ENCODE measurements at regions of chr1 and their contacts with region 1.

Region 1: GRCh38 chr1:151059078-151059907 is at the start of gene CDC42SE1:
- DNase-seq: peak; percentile 68 to 93 (median 81)
- ATAC-seq: peak; percentile 77 to 83 (median 80)
- H3K4me3 ChIP-seq: peak within 1 kb of the TSS; percentile 78 to 100
- H3K4me3 Mint-ChIP-seq: peak within 1 kb of the TSS; percentile 93 to 99 (median 95)
- H3K27ac ChIP-seq: peak within 1 kb of the TSS; percentile 92
- H3K27ac Mint-ChIP-seq: peak within 1 kb of the TSS; percentile 96 to 99
- H3K4me1 ChIP-seq: peaks cover 19 to 39% of the 10 kb centered on the region in 2 experiments
- H3K4me1 Mint-ChIP-seq: peaks cover 46 to 59% (median 47%) of the 10 kb centered on the region in 3 donors
- H3K27me3 ChIP-seq: no peaks in the 10 kb centered on the region
- H3K27me3 Mint-ChIP-seq: no peaks in the 10 kb centered on the region
- total RNA-seq, gene CDC42SE1: 419 to 475 (median 450) TPM

Region 2: GRCh38 chr1:150186789-150187559 is 872.3 kb before region 1 on chr1:
- CTCF ChIA-PET with region 1: interaction called in 1 of 2 experiments, 12 read pairs
- POLR2A ChIA-PET with region 1: no interaction called
- DNase-seq: peak in 17 of 35 experiments; percentile 1 to 72 (median 13)
- ATAC-seq: peak; percentile 75 to 88 (median 77)
- H3K4me3 ChIP-seq: no peak overlapping the region
- H3K4me3 Mint-ChIP-seq: peak overlapping the region in 1 of 3 donors; percentile 17
- H3K27ac ChIP-seq: no peak overlapping the region
- H3K27ac Mint-ChIP-seq: peak overlapping the region in 1 of 2 donors; percentile 23
- H3K4me1 ChIP-seq: peaks cover 2 to 13% of the 10 kb centered on the region in 2 experiments
- H3K4me1 Mint-ChIP-seq: peaks cover 0 to 11% (median 9%) of the 10 kb centered on the region in 3 donors
- H3K27me3 ChIP-seq: peaks cover 0 to 3% of the 10 kb centered on the region in 2 experiments
- H3K27me3 Mint-ChIP-seq: peaks cover 0 to 3% of the 10 kb centered on the region in 2 donors

Region 3: DNA sequence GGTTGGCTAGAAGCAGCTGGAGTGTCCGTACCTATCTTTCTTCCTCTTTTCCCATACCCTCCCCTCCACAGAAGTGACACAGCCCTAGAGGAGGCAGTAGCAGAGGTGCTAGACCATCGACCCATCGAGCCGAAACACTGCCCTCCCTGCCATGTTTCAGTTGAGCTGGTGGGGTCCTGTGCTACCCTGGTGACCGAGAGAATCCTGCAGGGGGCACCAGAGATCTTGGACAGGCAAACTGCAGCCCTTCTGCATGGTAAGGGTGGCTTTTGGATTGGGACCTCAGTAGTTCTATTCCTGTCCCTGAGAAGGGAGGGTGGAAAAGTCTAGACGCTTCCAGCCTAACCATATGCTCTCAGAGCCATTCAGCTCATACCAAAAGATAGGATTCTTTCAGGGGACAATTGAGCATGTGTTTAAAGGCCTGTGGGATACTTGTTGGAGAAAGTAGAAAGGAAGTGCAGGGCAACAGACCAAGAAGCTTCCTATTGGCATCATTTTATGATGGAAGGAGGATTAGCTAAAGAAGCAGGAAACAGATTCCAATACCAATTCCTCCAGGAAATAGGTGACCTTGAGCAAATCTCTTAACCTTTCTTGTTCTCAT is 34.6 kb before region 1 on chr1:
- CTCF ChIA-PET with region 1: interaction called, 3 to 22 read pairs
- POLR2A ChIA-PET with region 1: interaction called, 4 to 6 read pairs
- DNase-seq: peak; percentile 72 to 92 (median 85)
- ATAC-seq: peak; percentile 99 to 100 (median 100)
- H3K4me3 ChIP-seq: no peak overlapping the region
- H3K4me3 Mint-ChIP-seq: peak overlapping the region in 2 of 3 donors; percentile 23 to 43
- H3K27ac ChIP-seq: no peak overlapping the region
- H3K27ac Mint-ChIP-seq: peak overlapping the region; percentile 31 to 36
- H3K4me1 ChIP-seq: peaks cover 0 to 7% of the 10 kb centered on the region in 2 experiments
- H3K4me1 Mint-ChIP-seq: peaks cover 6 to 16% (median 8%) of the 10 kb centered on the region in 3 donors
- H3K27me3 ChIP-seq: no peaks in the 10 kb centered on the region
- H3K27me3 Mint-ChIP-seq: no peaks in the 10 kb centered on the region

Region 4: GRCh38 chr1:151047925-151048645 is 11.2 kb before region 1 on chr1:
- CTCF ChIA-PET with region 1: interaction called, 3 to 10 read pairs
- POLR2A ChIA-PET with region 1: interaction called, 4 to 16 read pairs
- DNase-seq: peak in 33 of 35 experiments; percentile 32 to 79 (median 50)
- ATAC-seq: peak; percentile 61 to 79 (median 64)
- H3K4me3 ChIP-seq: peak overlapping the region; percentile 75 to 95
- H3K4me3 Mint-ChIP-seq: peak overlapping the region; percentile 88 to 92 (median 89)
- H3K27ac ChIP-seq: peak overlapping the region; percentile 72
- H3K27ac Mint-ChIP-seq: peak overlapping the region; percentile 96
- H3K4me1 ChIP-seq: peaks cover 20 to 41% of the 10 kb centered on the region in 2 experiments
- H3K4me1 Mint-ChIP-seq: peaks cover 70 to 78% (median 73%) of the 10 kb centered on the region in 3 donors
- H3K27me3 ChIP-seq: no peaks in the 10 kb centered on the region
- H3K27me3 Mint-ChIP-seq: no peaks in the 10 kb centered on the region

Region 5: DNA sequence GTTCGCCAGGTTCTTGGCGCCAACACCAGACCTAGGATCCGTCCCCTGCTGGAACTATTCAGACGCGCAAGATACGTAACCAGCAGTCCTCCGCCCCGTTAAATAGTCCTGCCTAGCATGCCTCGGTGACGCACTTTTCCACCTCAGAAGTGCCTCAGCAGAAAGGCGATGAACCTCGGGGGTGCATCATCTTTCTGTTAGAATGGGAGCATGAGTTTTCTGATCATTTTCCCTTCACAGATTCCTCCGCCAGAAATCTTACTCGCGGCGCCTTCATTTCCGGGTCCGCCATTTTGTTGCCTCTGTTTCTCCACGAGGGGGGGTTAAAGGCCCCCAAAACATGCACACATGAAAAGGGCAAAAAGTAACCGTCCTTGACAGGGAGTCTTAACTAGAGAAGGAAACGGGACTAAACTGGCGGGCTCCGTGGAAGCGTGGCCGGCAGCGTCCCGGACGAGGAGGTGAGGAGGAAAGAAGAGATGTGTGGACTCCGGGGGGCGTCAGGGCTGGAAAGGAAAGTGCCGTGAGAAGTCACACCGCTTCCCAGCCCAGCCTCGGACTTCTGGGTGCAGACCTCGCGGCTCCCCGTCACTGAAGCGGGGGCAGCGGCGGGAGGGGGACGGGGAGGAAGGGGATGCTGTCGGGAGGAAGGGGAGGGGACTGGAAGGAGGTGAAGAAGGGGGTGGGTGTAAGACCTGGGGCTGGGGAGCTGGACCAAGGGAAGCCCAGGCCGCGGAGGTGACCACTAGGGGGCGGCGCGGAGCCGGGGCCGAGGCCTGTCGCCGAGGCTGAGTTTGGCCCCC is 11.4 kb after region 1 on chr1 and contains the start of gene GABPB2:
- CTCF ChIA-PET with region 1: interaction called, 5 to 10 read pairs
- POLR2A ChIA-PET with region 1: interaction called in 1 of 2 experiments, 14 read pairs
- DNase-seq: peak; percentile 68 to 93 (median 79)
- ATAC-seq: peak; percentile 81 to 85 (median 82)
- H3K4me3 ChIP-seq: peak within 1 kb of the TSS; percentile 87 to 98
- H3K4me3 Mint-ChIP-seq: peak within 1 kb of the TSS; percentile 94 to 97 (median 96)
- H3K27ac ChIP-seq: peak within 1 kb of the TSS; percentile 94
- H3K27ac Mint-ChIP-seq: peak within 1 kb of the TSS; percentile 100
- H3K4me1 ChIP-seq: peaks cover 3 to 24% of the 10 kb centered on the region in 2 experiments
- H3K4me1 Mint-ChIP-seq: peaks cover 24 to 30% (median 28%) of the 10 kb centered on the region in 3 donors
- H3K27me3 ChIP-seq: no peaks in the 10 kb centered on the region
- H3K27me3 Mint-ChIP-seq: no peaks in the 10 kb centered on the region
- total RNA-seq, gene GABPB2: 29.6 to 41.3 (median 32.5) TPM

Region 6: GRCh38 chr1:151175910-151176309 is 116.6 kb after region 1 on chr1 and contains the start of gene TMOD4:
- CTCF ChIA-PET with region 1: no interaction called
- POLR2A ChIA-PET with region 1: no interaction called
- DNase-seq: no peak
- ATAC-seq: peak in 3 of 4 experiments; percentile 47 to 70 (median 61)
- H3K4me3 ChIP-seq: no peak within 1 kb of the TSS
- H3K4me3 Mint-ChIP-seq: no peak within 1 kb of the TSS
- H3K27ac ChIP-seq: no peak within 1 kb of the TSS
- H3K27ac Mint-ChIP-seq: peak within 1 kb of the TSS; percentile 34 to 48
- H3K4me1 ChIP-seq: no peaks in the 10 kb centered on the region
- H3K4me1 Mint-ChIP-seq: peaks cover 0 to 10% (median 2%) of the 10 kb centered on the region in 3 donors
- H3K27me3 ChIP-seq: no peaks in the 10 kb centered on the region
- H3K27me3 Mint-ChIP-seq: no peaks in the 10 kb centered on the region
- total RNA-seq, gene TMOD4: 1.9 to 6.2 (median 5.3) TPM

Region 7: GRCh38 chr1:151189638-151190445 is 130.5 kb after region 1 on chr1 and contains the start of gene VPS72:
- CTCF ChIA-PET with region 1: no interaction called
- POLR2A ChIA-PET with region 1: no interaction called
- DNase-seq: peak; percentile 67 to 91 (median 82)
- ATAC-seq: peak; percentile 92 to 95 (median 94)
- H3K4me3 ChIP-seq: peak within 1 kb of the TSS; percentile 78 to 85
- H3K4me3 Mint-ChIP-seq: peak within 1 kb of the TSS; percentile 98 to 100 (median 99)
- H3K27ac ChIP-seq: peak within 1 kb of the TSS; percentile 70
- H3K27ac Mint-ChIP-seq: peak within 1 kb of the TSS; percentile 97 to 98
- H3K4me1 ChIP-seq: peaks cover 12 to 15% of the 10 kb centered on the region in 2 experiments
- H3K4me1 Mint-ChIP-seq: peaks cover 34 to 40% (median 37%) of the 10 kb centered on the region in 3 donors
- H3K27me3 ChIP-seq: no peaks in the 10 kb centered on the region
- H3K27me3 Mint-ChIP-seq: no peaks in the 10 kb centered on the region
- total RNA-seq, gene VPS72: 50.2 to 84.5 (median 58.9) TPM

Region 8: DNA sequence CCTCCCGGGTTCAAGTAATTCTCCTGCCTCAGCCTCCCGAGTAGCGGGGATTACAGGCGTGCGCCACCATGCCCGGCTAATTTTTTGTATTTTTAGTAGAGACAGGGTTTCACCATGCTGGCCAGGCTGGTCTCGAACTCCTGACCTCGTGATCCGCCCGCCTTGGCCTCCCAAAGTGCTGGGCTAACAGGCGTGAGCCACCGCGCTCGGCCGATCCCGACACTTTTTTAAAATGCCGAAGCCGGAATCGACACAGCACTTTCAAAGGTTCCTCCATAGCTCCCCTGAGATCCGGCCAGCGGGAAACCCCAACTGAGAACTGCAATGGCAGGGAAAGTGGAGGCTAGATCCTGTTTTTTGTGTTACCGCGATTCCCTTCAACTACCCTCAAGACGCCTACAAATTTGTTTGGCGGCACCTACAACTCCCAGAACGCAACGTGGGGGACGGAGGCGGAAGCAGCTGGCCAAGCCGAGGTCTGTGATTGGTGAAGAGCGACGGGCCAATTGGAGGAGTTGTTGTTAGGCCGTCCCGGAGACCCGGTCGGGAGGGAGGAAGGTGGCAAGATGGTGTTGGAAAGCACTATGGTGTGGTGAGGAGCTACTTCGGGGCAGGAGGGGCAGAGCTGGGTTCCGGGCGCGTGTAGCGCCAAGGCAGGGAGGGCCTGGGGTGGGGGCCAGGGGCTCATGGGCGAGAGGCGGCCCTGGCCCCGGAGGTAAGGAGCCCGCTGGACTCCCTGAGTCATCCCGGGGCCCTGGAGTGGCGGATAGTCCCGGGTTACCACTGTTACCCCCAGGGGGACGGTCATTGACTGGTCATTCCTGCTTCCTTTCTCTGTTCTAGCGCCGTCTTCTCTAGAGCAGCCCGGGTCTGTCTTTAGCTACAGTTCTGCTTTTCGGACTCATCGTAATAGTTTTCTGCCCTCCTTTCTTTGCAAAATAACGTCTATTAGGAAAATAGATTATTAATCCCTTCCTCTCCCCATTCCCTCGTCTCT is 195.2 kb after region 1 on chr1 and contains the start of gene PSMD4:
- CTCF ChIA-PET with region 1: interaction called in 1 of 2 experiments, 4 read pairs
- POLR2A ChIA-PET with region 1: interaction called, 3 to 12 read pairs
- DNase-seq: peak; percentile 78 to 97 (median 93)
- ATAC-seq: peak; percentile 93 to 96 (median 94)
- H3K4me3 ChIP-seq: peak within 1 kb of the TSS; percentile 82 to 92
- H3K4me3 Mint-ChIP-seq: peak within 1 kb of the TSS; percentile 83 to 91 (median 88)
- H3K27ac ChIP-seq: peak within 1 kb of the TSS; percentile 69
- H3K27ac Mint-ChIP-seq: peak within 1 kb of the TSS; percentile 89
- H3K4me1 ChIP-seq: peaks cover 6 to 29% of the 10 kb centered on the region in 2 experiments
- H3K4me1 Mint-ChIP-seq: peaks cover 27 to 39% (median 36%) of the 10 kb centered on the region in 3 donors
- H3K27me3 ChIP-seq: no peaks in the 10 kb centered on the region
- H3K27me3 Mint-ChIP-seq: no peaks in the 10 kb centered on the region
- total RNA-seq, gene PSMD4: 68.1 to 150 (median 133) TPM

Region 9: GRCh38 chr1:151281969-151282882 is 222.9 kb after region 1 on chr1 and contains the start of gene ZNF687:
- CTCF ChIA-PET with region 1: no interaction called
- POLR2A ChIA-PET with region 1: no interaction called
- DNase-seq: peak; percentile 96 to 100 (median 99)
- ATAC-seq: peak; percentile 87 to 89 (median 88)
- H3K4me3 ChIP-seq: peak within 1 kb of the TSS; percentile 74 to 93
- H3K4me3 Mint-ChIP-seq: peak within 1 kb of the TSS; percentile 91 to 98 (median 97)
- H3K27ac ChIP-seq: peak within 1 kb of the TSS; percentile 95
- H3K27ac Mint-ChIP-seq: peak within 1 kb of the TSS; percentile 94 to 95
- H3K4me1 ChIP-seq: peaks cover 2 to 33% of the 10 kb centered on the region in 2 experiments
- H3K4me1 Mint-ChIP-seq: peaks cover 29 to 41% (median 33%) of the 10 kb centered on the region in 3 donors
- H3K27me3 ChIP-seq: no peaks in the 10 kb centered on the region
- H3K27me3 Mint-ChIP-seq: no peaks in the 10 kb centered on the region
- total RNA-seq, gene ZNF687: 27.7 to 44.2 (median 40.5) TPM

Measured in T-cell (primary cell).